Activated CD4-positive, alpha-beta memory T cell treated with anti-CD3 and anti-CD28 coated beads, Interleukin-2, amount 10 ng/mL, durations not matched to agents 7 days and 5 days (primary cell): ENCODE measurements at regions of chr15 and their contacts with region 1.

Region 1: GRCh38 chr15:75578948-75579920 is at the start of gene PTPN9:
- DNase-seq: peak; percentile 81
- H3K4me3 Mint-ChIP-seq: peak within 1 kb of the TSS; percentile 86
- H3K27ac Mint-ChIP-seq: peak within 1 kb of the TSS; percentile 93
- H3K4me1 Mint-ChIP-seq: peaks cover 24% of the 10 kb centered on the region
- H3K27me3 Mint-ChIP-seq: no peaks in the 10 kb centered on the region
- total RNA-seq, gene PTPN9: 41.4 to 41.6 TPM

Region 2: GRCh38 chr15:75597667-75598341 is 18.6 kb after region 1 on chr15:
- CTCF ChIA-PET with region 1: interaction called, 29 read pairs
- POLR2A ChIA-PET with region 1: interaction called, 83 read pairs
- DNase-seq: peak; percentile 77
- H3K4me3 Mint-ChIP-seq: peak overlapping the region; percentile 53
- H3K27ac Mint-ChIP-seq: peak overlapping the region; percentile 96
- H3K4me1 Mint-ChIP-seq: peaks cover 50% of the 10 kb centered on the region
- H3K27me3 Mint-ChIP-seq: no peaks in the 10 kb centered on the region

Region 3: GRCh38 chr15:75606711-75607699 is 27.8 kb after region 1 on chr15:
- CTCF ChIA-PET with region 1: interaction called, 15 read pairs
- POLR2A ChIA-PET with region 1: interaction called, 51 read pairs
- DNase-seq: peak; percentile 70
- H3K4me3 Mint-ChIP-seq: peak overlapping the region; percentile 60
- H3K27ac Mint-ChIP-seq: peak overlapping the region; percentile 98
- H3K4me1 Mint-ChIP-seq: peaks cover 52% of the 10 kb centered on the region
- H3K27me3 Mint-ChIP-seq: no peaks in the 10 kb centered on the region

Region 4: GRCh38 chr15:75625542-75626347 is 46.5 kb after region 1 on chr15 and contains the start of gene SNUPN:
- CTCF ChIA-PET with region 1: interaction called, 16 read pairs
- POLR2A ChIA-PET with region 1: interaction called, 36 read pairs
- DNase-seq: peak; percentile 96
- H3K4me3 Mint-ChIP-seq: peak within 1 kb of the TSS; percentile 93
- H3K27ac Mint-ChIP-seq: peak within 1 kb of the TSS; percentile 96
- H3K4me1 Mint-ChIP-seq: peaks cover 38% of the 10 kb centered on the region
- H3K27me3 Mint-ChIP-seq: no peaks in the 10 kb centered on the region
- total RNA-seq, gene SNUPN: 29.6 to 30.9 TPM

Region 5: GRCh38 chr15:75647370-75648155 is 68.3 kb after region 1 on chr15 and contains the start of gene SNX33:
- CTCF ChIA-PET with region 1: interaction called, 25 read pairs
- POLR2A ChIA-PET with region 1: interaction called, 10 read pairs
- DNase-seq: peak; percentile 60
- H3K4me3 Mint-ChIP-seq: peak within 1 kb of the TSS; percentile 79
- H3K27ac Mint-ChIP-seq: no peak within 1 kb of the TSS
- H3K4me1 Mint-ChIP-seq: peaks cover 29% of the 10 kb centered on the region
- H3K27me3 Mint-ChIP-seq: peaks cover 10% of the 10 kb centered on the region
- total RNA-seq, gene SNX33: 1.8 to 1.9 TPM

Region 6: DNA sequence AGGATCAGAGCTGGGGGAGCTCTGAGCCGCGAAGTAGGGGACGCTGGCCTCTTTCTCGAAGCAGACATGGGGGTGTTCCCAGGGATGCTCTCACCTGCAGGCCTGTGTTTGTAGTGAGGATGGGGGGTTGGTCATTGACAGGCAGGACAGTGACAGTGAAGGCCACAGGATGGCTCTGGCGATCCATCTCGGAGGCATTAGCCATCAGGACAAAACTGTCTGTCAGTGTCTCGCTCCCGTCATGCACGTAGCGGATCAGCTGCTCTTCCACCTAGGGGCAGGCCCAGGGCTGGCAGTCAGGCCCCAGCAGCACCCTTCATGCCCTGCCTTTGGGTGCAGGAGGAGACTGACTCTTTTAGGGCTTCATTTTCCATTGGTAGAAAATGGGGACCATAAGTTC is 105.4 kb after region 1 on chr15:
- CTCF ChIA-PET with region 1: no interaction called
- POLR2A ChIA-PET with region 1: no interaction called
- DNase-seq: no peak
- H3K4me3 Mint-ChIP-seq: no peak overlapping the region
- H3K27ac Mint-ChIP-seq: no peak overlapping the region
- H3K4me1 Mint-ChIP-seq: no peaks in the 10 kb centered on the region
- H3K27me3 Mint-ChIP-seq: no peaks in the 10 kb centered on the region